Gastrocnemius medialis (tissue), 4 donors: ENCODE measurements at regions of chr7 and their contacts with region 1.

Region 1: GRCh38 chr7:43582503-43583423 is at the start of gene STK17A:
- DNase-seq: peak; percentile 86 to 91
- ATAC-seq: peak; percentile 85 to 88
- H3K4me3 ChIP-seq: peak within 1 kb of the TSS; percentile 73 to 88 (median 74)
- H3K27ac ChIP-seq: peak within 1 kb of the TSS; percentile 81 to 96 (median 94)
- H3K4me1 ChIP-seq: peaks cover 14 to 21% of the 10 kb centered on the region in 2 donors
- H3K27me3 ChIP-seq: no peaks in the 10 kb centered on the region
- CTCF ChIP-seq: peak; percentile 93 to 100 (median 99)
- POLR2A ChIP-seq: peak; percentile 90
- total RNA-seq, gene STK17A: 19.7 to 22.3 (median 21.4) TPM

Region 2: GRCh38 chr7:43314379-43315189 is 268.2 kb before region 1 on chr7:
- in situ Hi-C with region 1: no loop called
- intact Hi-C with region 1: no loop called
- DNase-seq: no peak
- ATAC-seq: no peak
- H3K4me3 ChIP-seq: no peak overlapping the region
- H3K27ac ChIP-seq: no peak overlapping the region
- H3K4me1 ChIP-seq: no peaks in the 10 kb centered on the region
- H3K27me3 ChIP-seq: no peaks in the 10 kb centered on the region
- CTCF ChIP-seq: no peak
- POLR2A ChIP-seq: no peak

Region 3: GRCh38 chr7:43647673-43648472 is 65.1 kb after region 1 on chr7:
- in situ Hi-C with region 1: no loop called
- intact Hi-C with region 1: loop called (anchors 1 kb)
- DNase-seq: peak; percentile 63 to 70
- ATAC-seq: peak; percentile 92 to 93
- H3K4me3 ChIP-seq: peak overlapping the region in 1 of 4 donors; percentile 39
- H3K27ac ChIP-seq: peak overlapping the region; percentile 59 to 83 (median 80)
- H3K4me1 ChIP-seq: peaks cover 45 to 56% of the 10 kb centered on the region in 2 donors
- H3K27me3 ChIP-seq: no peaks in the 10 kb centered on the region
- CTCF ChIP-seq: no peak
- POLR2A ChIP-seq: no peak

Region 4: GRCh38 chr7:43700059-43700501 is 117.3 kb after region 1 on chr7:
- in situ Hi-C with region 1: loop called in 3 of 4 experiments (anchors 5 to 10 kb)
- intact Hi-C with region 1: loop called (anchors 1 kb)
- DNase-seq: no peak
- ATAC-seq: peak; percentile 68 to 75
- H3K4me3 ChIP-seq: no peak overlapping the region
- H3K27ac ChIP-seq: no peak overlapping the region
- H3K4me1 ChIP-seq: peaks cover 13 to 16% of the 10 kb centered on the region in 2 donors
- H3K27me3 ChIP-seq: no peaks in the 10 kb centered on the region
- CTCF ChIP-seq: peak; percentile 48 to 78 (median 69)
- POLR2A ChIP-seq: no peak

Region 5: DNA sequence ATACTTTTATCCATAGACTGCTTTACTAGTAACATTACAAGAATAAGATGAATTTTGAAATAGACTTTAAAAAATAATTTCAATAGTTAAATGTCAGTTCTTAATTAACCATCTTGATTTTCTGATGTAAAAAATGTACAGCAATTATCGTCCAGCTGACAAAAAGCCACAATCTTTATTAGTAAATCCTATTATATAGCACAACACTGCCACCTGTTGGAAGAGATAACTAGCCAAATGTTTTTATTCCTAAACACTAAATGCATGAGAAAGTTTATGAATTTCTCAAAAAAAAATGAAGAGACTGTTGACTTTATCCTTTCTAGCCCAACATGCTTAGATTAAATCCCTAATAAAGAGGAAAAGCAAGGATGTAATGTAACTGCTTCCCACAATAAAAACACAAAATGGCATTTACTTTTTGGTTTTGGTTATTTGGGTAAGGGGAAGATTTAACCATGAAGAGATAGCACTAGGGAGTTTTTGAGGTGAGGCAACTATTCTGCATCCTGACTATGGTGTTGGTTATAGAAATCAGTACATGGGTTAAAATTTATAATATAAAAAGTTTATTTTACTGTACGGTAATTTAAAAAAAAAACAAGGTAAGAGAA is 138.5 kb after region 1 on chr7:
- in situ Hi-C with region 1: no loop called
- intact Hi-C with region 1: loop called (anchors 1 kb)
- DNase-seq: no peak
- ATAC-seq: peak in 1 of 2 donors; percentile 46
- H3K4me3 ChIP-seq: no peak overlapping the region
- H3K27ac ChIP-seq: peak overlapping the region in 2 of 4 donors; percentile 14 to 59
- H3K4me1 ChIP-seq: peaks cover 36 to 44% of the 10 kb centered on the region in 2 donors
- H3K27me3 ChIP-seq: no peaks in the 10 kb centered on the region
- CTCF ChIP-seq: peak; percentile 49 to 85 (median 73)
- POLR2A ChIP-seq: no peak

Region 6: GRCh38 chr7:43834463-43835251 is 251.9 kb after region 1 on chr7:
- in situ Hi-C with region 1: loop called (anchors 10 to 25 kb)
- intact Hi-C with region 1: loop called (anchors 1 kb)
- DNase-seq: no peak
- ATAC-seq: no peak
- H3K4me3 ChIP-seq: peak overlapping the region; percentile 11 to 26 (median 20)
- H3K27ac ChIP-seq: no peak overlapping the region
- H3K4me1 ChIP-seq: no peaks in the 10 kb centered on the region
- H3K27me3 ChIP-seq: peaks cover 0 to 9% (median 0%) of the 10 kb centered on the region in 3 donors
- CTCF ChIP-seq: no peak
- POLR2A ChIP-seq: no peak